CD14-positive monocyte (primary cell): ENCODE measurements at regions of chr20 and their contacts with region 1.

Region 1: GRCh38 chr20:7285918-7286556 is 518.6 kb downstream of the BMP2 start:
- DNase-seq: peak; percentile 11 to 27 (median 11)
- H3K4me3 ChIP-seq: no peak overlapping the region
- H3K4me3 Mint-ChIP-seq: no peak overlapping the region
- H3K27ac ChIP-seq: no peak overlapping the region
- H3K27ac Mint-ChIP-seq: no peak overlapping the region
- H3K4me1 ChIP-seq: no peaks in the 10 kb centered on the region
- H3K4me1 Mint-ChIP-seq: no peaks in the 10 kb centered on the region
- H3K27me3 ChIP-seq: peaks cover 4% of the 10 kb centered on the region in 2 donors
- H3K27me3 Mint-ChIP-seq: peaks cover 0 to 2% (median 1%) of the 10 kb centered on the region in 3 donors
- CTCF ChIP-seq: peak; percentile 79

Region 2: GRCh38 chr20:6767536-6768227 is 518.4 kb before region 1 on chr20 and contains the start of gene BMP2:
- intact Hi-C with region 1: loop called in 1 of 2 experiments (anchors 10 kb)
- DNase-seq: peak in 1 of 3 donors; percentile 6
- H3K4me3 ChIP-seq: peak within 1 kb of the TSS; percentile 30 to 71 (median 54)
- H3K4me3 Mint-ChIP-seq: peak within 1 kb of the TSS; percentile 74 to 84
- H3K27ac ChIP-seq: no peak within 1 kb of the TSS
- H3K27ac Mint-ChIP-seq: no peak within 1 kb of the TSS
- H3K4me1 ChIP-seq: peaks cover 10 to 16% of the 10 kb centered on the region in 2 donors
- H3K4me1 Mint-ChIP-seq: peaks cover 15% of the 10 kb centered on the region
- H3K27me3 ChIP-seq: peaks cover 66 to 70% of the 10 kb centered on the region in 2 donors
- H3K27me3 Mint-ChIP-seq: peaks cover 59 to 80% (median 61%) of the 10 kb centered on the region in 3 donors
- CTCF ChIP-seq: no peak
- polyA plus RNA-seq, gene BMP2: 0.07 TPM in 1 of 3 donors, not detected in the others